IMR-90 (cell line): ENCODE measurements at regions of chr13 and their contacts with region 1.

Region 1: DNA sequence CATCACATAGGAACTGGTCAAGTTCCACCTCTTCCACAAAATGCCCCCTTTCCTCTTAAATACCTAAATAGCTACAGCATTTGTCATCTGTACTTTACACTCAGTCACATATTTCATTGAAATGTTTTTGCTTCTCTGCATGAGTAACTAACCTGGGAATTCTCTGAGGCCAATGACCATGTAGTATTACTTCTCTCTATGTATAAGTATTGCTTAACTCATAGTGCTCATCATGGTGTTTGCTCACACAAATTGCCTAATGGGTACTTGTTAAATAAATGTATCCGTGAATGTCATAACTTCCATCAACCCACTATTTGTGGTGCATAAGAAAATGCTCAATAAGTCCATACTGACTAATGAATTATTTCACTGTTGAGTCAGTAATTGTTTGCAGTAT is 115.5 kb downstream of the FGF14 start:
- DNase-seq: peak; percentile 96
- ATAC-seq: peak; percentile 93
- H3K4me3 ChIP-seq: no peak overlapping the region
- H3K27ac ChIP-seq: peak overlapping the region; percentile 82
- H3K4me1 ChIP-seq: peaks cover 2% of the 10 kb centered on the region; the same call in 1 of the 2 replicates
- H3K27me3 ChIP-seq: peaks cover 3% of the 10 kb centered on the region; the same call in 1 of the 2 replicates
- CTCF ChIP-seq: no peak
- POLR2A ChIP-seq: no peak
- RAD21 ChIP-seq: no peak

Region 2: DNA sequence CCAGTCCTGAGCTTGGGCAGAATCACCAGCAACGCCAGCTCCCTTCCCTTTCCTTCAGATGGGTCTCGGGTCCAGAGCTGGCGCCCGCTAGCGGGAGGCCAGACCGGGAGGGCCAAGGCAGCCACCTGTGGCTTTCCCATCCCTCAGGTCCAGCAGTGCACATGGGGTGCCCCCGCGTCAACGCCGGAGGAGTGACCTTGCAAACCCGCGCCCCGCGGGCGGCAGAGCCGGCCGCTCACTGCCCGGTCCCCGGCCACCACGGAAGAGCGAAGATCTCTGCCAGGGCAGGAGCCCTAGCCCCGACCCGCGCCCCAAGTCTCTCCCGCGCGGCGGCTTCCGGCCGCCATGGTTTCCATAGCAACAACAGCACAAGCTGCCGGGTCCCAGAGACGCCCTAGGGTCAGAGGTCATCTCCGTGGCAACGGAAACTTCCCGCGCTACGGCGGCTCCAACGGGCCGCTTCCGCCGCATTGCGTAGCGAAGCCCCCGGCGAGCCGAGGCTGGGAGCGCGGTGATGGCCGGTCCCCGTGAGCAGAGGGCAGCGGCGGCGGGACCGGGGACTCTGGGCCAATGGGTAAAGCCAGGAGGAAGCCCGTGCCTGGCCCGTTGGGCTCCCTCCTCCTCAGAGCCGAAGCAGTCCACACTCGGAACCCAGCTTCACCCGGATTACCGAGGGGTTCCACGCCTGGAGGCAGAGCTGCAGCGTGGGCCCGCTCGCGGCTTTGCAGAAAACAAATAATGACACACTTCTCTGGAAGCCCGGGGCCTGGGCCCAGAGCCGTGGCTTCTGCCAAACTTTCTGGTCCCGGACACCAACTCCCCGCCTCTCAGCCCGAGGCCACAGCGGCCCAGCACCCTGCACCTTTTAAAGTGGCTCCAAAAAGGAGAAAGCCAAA is 108.1 kb after region 1 on chr13:
- CTCF ChIA-PET with region 1: no interaction called
- POLR2A ChIA-PET with region 1: no interaction called
- dilution Hi-C with region 1: no loop called
- in situ Hi-C with region 1: no loop called
- intact Hi-C with region 1: loop called (anchors 5 kb)
- DNase-seq: peak; percentile 73
- ATAC-seq: peak; percentile 95
- H3K4me3 ChIP-seq: peak overlapping the region; percentile 66
- H3K27ac ChIP-seq: peak overlapping the region; percentile 62
- H3K4me1 ChIP-seq: no peaks in the 10 kb centered on the region
- H3K27me3 ChIP-seq: peaks cover 2% of the 10 kb centered on the region
- CTCF ChIP-seq: 0 out of 2 replicates have a peak, but pooled peaks have one; percentile 4
- POLR2A ChIP-seq: no peak
- RAD21 ChIP-seq: no peak